Activated CD4-positive, alpha-beta T cell treated with anti-CD3 and anti-CD28 coated beads, Interleukin-2, amount 10 ng/mL, durations not matched to agents 24 days and 14 days (primary cell): ENCODE measurements at regions of chr7 and their contacts with region 1.

Region 1: DNA sequence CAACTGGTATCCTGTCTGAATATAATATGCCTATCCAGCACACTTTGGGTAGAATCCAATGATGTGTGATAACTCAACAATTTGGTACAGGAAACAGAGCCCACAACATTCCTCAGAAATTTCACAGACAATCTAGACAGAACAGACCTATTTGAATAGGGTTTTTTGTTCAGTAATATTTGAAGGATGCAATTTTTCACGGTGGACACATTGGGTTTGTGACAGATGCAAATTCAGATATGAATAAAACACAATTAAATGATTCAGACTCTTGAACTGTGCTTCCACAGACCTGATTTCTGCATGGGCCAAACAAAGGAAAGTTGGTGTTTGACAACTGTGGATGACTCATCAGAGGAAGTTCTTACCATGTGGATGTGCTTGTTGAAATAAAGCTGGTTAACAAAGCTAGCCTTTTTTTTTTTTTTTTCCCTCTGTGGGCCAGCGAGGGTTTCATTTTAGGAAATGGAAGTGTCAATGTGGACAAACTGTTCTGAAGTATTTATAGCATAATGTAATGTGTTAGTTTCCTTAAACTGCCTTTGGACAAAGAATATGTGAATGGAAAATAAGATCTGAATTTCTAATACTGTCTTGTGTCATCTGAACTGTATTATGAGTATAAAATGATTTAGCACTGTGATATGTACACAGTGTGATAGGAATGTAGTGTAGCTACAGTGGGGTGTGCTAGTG is 43.2 kb upstream of the FAM133B start:
- DNase-seq: peak; percentile 84
- H3K4me3 Mint-ChIP-seq: peak overlapping the region; percentile 65
- H3K27ac Mint-ChIP-seq: peak overlapping the region; percentile 97
- H3K4me1 Mint-ChIP-seq: peaks cover 64% of the 10 kb centered on the region
- H3K27me3 Mint-ChIP-seq: no peaks in the 10 kb centered on the region

Region 2: DNA sequence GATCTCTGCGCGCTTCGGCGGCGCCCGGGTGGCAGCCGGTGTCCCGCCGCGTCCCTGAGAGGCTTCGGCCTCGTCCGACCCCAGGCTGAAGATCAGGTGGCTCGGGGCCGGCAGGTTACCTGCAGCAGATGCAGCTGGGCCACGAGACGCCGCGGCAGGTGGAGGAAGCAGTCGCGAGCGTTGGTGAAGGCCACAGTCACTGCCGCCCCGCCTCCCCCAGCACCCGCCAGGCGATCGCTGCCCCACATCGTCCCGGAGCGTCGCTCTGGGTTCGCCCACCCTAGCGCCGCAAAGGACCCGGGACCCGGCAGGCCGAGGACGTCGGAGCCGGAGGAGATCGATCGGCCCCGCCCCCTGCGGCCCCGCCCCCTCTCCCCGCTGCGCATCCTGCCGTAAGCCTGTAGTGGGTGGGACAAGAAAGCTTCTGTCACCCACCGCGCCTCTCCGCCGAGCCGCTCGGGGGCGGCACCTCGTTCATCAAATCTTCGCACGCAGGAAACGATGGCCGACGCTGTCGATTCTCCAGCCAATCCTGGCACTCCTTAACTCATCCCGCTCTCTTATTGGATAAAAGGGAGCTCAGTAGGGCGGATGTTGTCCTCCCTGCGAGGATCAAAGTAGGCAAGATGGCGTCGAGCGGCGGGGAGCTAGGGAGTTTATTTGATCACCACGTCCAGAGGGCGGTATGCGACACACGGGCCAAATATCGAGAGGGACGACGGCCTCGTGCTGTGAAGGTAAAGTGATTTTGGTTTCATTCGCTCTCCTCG is 105.0 kb before region 1 on chr7 and contains the starts of genes PEX1 and RBM48:
- intact Hi-C with region 1: no loop called
- DNase-seq: peak; percentile 98
- H3K4me3 Mint-ChIP-seq: peak within 1 kb of the TSS; percentile 98
- H3K27ac Mint-ChIP-seq: peak within 1 kb of the TSS; percentile 98
- H3K4me1 Mint-ChIP-seq: peaks cover 22% of the 10 kb centered on the region
- H3K27me3 Mint-ChIP-seq: peaks cover 2% of the 10 kb centered on the region
- total RNA-seq, gene PEX1: 14.4 and 14.8 TPM in 2 replicates
- total RNA-seq, gene RBM48: 14.4 and 17.3 TPM in 2 replicates

Region 3: GRCh38 chr7:92609921-92610518 is 23.3 kb before region 1 on chr7:
- intact Hi-C with region 1: no loop called
- DNase-seq: no peak
- H3K4me3 Mint-ChIP-seq: no peak overlapping the region
- H3K27ac Mint-ChIP-seq: peak overlapping the region; percentile 47
- H3K4me1 Mint-ChIP-seq: peaks cover 32% of the 10 kb centered on the region
- H3K27me3 Mint-ChIP-seq: no peaks in the 10 kb centered on the region

Region 4: GRCh38 chr7:92648067-92648466 is 14.7 kb after region 1 on chr7:
- intact Hi-C with region 1: loop called (anchors 1 kb)
- DNase-seq: no peak
- H3K4me3 Mint-ChIP-seq: peak overlapping the region; percentile 70
- H3K27ac Mint-ChIP-seq: peak overlapping the region; percentile 97
- H3K4me1 Mint-ChIP-seq: peaks cover 78% of the 10 kb centered on the region
- H3K27me3 Mint-ChIP-seq: no peaks in the 10 kb centered on the region

Region 5: DNA sequence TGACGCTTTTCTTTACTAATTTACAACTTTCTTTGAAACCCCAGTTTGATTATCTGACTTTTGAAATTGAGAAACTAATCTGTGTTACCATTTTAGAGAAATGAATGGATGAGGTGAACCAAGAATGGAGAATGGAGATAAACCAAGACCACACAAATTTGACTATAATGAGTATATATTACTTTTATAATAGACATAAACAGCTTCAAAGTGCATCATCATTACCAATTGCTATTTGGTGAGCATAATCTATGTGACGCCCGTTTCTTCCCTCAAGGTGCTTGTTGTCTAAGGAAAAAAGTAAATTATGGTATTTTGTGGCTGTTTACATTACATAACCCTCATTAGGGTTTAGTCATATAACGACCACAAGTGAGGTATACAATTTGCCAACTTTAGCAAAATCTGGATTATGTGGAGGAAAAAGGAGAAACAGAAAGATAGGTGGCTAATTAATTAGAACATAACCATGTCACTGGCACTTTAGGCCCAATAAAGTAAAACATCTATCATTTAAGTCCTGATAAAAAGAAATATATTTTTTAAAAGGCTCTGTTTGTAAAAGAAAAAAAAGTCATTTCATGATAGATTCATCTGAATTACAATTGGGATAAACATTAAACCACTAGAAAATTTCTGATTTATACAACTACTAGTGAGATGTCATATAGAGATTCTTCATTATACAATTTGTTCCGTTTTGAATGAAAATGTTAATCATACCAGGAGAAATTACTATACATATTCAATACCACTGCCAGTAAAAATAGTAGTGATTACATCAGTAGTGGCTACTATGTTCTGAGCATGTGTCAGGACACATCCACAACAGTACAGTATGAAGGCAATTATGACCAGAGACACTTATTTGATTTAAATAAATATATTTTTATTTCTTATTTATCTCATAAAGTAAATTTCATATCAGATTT is 75.0 kb after region 1 on chr7:
- intact Hi-C with region 1: loop called (anchors 1 kb)
- DNase-seq: no peak
- H3K4me3 Mint-ChIP-seq: no peak overlapping the region
- H3K27ac Mint-ChIP-seq: peak overlapping the region; percentile 79
- H3K4me1 Mint-ChIP-seq: peaks cover 34% of the 10 kb centered on the region
- H3K27me3 Mint-ChIP-seq: no peaks in the 10 kb centered on the region

Region 6: DNA sequence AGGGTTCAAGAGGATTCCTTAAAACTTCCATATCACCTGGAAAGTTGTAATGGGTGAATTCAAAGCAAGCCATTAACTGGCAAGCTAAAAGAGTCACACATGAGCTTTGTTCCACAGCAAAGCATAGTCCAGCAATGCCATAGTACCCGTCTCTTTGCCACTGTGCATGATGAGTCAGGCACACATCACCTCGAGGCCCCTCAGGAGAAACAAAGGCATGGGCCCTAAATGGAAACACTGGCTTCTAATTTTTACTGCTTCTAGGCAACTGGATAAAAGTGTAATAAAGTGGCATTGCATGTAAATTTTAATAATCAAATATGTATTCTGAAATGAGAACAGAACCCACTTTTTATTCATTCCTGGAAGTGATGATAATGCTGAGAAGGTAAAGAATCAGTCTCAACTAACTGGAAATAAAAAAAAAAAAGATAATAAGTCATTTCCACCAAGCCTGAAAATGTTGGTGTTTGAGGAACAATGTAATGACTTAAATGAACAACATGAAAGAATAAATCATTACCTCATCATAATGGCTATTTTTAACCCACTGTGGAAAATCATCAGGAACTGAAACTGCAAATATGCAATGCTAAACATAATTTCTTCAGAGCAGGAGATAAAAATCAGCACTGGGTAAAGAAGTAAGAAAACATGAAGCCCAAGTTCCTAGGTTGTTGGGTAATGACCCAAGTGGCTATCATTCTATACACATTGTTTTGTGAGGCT is 98.1 kb after region 1 on chr7:
- intact Hi-C with region 1: loop called (anchors 1 kb)
- DNase-seq: no peak
- H3K4me3 Mint-ChIP-seq: peak overlapping the region; percentile 64
- H3K27ac Mint-ChIP-seq: peak overlapping the region; percentile 95
- H3K4me1 Mint-ChIP-seq: peaks cover 54% of the 10 kb centered on the region
- H3K27me3 Mint-ChIP-seq: no peaks in the 10 kb centered on the region

Region 7: DNA sequence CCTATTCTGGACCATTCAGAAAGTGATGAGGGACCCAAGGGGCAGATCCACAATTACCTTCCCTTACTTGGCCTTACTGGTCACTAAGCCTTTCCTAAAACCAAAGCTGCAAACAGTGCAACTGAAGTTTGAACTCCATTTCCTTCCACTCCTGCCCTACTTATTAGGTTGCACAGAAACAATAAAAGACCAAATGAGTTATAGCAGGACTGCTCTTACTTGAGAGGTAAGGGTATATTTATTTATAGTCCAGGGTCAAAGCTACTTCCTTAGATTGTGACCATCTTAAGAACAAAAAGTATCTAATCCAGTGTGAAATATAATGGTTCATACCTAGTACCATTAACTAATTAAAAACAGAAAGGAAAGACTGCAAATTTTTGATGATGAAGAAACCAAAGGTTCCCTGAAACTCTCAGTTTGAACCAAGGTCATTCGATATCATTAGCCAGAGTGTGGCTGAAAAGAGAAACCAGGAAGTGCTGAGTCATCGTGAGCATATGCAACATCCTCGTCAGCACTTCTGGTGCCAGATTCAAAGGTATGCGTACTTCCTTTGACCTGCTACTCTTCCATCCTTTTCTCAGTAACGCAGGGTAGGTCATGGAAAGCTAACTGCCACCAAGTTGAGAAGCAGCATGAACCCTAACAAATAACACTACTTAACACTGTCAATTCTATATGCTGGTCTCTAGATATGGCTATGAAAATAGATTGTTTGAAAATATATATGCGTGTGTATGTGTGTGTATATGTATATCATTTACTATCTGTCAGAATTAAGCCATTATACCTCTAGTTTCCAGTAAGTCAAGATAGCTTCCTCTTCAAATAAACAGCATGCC is 176.3 kb after region 1 on chr7:
- intact Hi-C with region 1: loop called (anchors 1 kb)
- DNase-seq: peak; percentile 91
- H3K4me3 Mint-ChIP-seq: peak overlapping the region; percentile 73
- H3K27ac Mint-ChIP-seq: peak overlapping the region; percentile 90
- H3K4me1 Mint-ChIP-seq: peaks cover 75% of the 10 kb centered on the region
- H3K27me3 Mint-ChIP-seq: no peaks in the 10 kb centered on the region

Region 8: GRCh38 chr7:92854501-92855238 is 221.3 kb after region 1 on chr7:
- intact Hi-C with region 1: no loop called
- DNase-seq: peak; percentile 68
- H3K4me3 Mint-ChIP-seq: peak overlapping the region; percentile 51
- H3K27ac Mint-ChIP-seq: peak overlapping the region; percentile 85
- H3K4me1 Mint-ChIP-seq: peaks cover 16% of the 10 kb centered on the region
- H3K27me3 Mint-ChIP-seq: no peaks in the 10 kb centered on the region

Region 9: DNA sequence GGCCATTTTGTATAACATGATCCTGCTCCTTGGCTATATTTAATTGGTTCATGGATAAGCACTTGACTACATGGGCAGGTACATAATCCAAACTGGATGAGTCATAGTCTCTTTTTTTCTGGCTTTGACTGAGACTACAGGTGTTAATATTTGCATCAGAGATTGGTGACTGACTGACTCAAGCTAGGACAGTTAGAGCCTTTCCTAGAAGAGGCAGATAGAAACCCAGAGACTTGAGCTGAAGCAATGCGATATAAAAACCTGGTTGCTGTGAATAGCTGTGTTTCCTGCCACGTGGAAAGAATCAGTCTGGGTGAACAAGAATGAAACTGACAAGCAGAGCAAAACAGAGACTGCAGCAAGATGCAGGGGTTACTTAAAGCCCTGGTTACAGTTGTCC is 403.4 kb after region 1 on chr7:
- intact Hi-C with region 1: loop called (anchors 5 kb)
- DNase-seq: peak; percentile 83
- H3K4me3 Mint-ChIP-seq: no peak overlapping the region
- H3K27ac Mint-ChIP-seq: peak overlapping the region; percentile 74
- H3K4me1 Mint-ChIP-seq: peaks cover 26% of the 10 kb centered on the region
- H3K27me3 Mint-ChIP-seq: no peaks in the 10 kb centered on the region